PC-9 (cell line): ENCODE measurements at regions of chr2 and their contacts with region 1.

Region 1: GRCh38 chr2:46471-47345 is at the start of gene FAM110C:
- DNase-seq: peak; percentile 93 to 94
- H3K4me3 ChIP-seq: peak within 1 kb of the TSS; percentile 80
- H3K27ac ChIP-seq: peak within 1 kb of the TSS; percentile 89
- H3K4me1 ChIP-seq: peaks cover 45% of the 10 kb centered on the region
- H3K27me3 ChIP-seq: no peaks in the 10 kb centered on the region
- CTCF ChIP-seq: no peak
- total RNA-seq, gene FAM110C: 20.8 and 21.1 TPM in 2 replicates

Region 2: DNA sequence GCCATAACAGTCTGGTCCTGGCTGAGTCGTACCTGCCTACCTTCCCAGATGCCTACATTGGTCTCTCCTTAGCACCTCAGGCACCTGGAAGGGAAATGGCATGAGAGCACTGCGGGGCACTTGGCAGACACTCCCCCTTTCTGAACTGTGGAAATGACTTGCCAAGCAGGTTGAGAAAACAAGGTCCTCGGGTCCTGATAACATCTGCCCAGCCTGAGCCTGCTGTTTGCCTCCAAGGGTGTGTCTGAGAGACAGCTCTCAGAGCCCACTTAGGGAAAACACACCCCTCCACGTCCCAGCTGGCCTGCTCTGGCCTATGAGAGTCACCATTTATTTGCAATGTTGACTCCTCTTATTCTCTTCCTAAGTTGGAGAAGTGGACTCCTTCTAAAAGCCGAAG is 10.9 kb before region 1 on chr2:
- CTCF ChIA-PET with region 1: no interaction called
- POLR2A ChIA-PET with region 1: no interaction called
- intact Hi-C with region 1: loop called (anchors 1 kb)
- DNase-seq: peak; percentile 88 to 99
- H3K4me3 ChIP-seq: 0 out of 2 replicates have a peak overlapping the region, but pooled peaks have one; percentile 6
- H3K27ac ChIP-seq: peak overlapping the region; percentile 41
- H3K4me1 ChIP-seq: peaks cover 81% of the 10 kb centered on the region
- H3K27me3 ChIP-seq: no peaks in the 10 kb centered on the region
- CTCF ChIP-seq: no peak

Region 3: GRCh38 chr2:69366-70344 is 22.9 kb after region 1 on chr2:
- CTCF ChIA-PET with region 1: no interaction called
- POLR2A ChIA-PET with region 1: interaction called, 20 read pairs
- intact Hi-C with region 1: loop called (anchors 2 kb)
- DNase-seq: peak; percentile 48 to 68
- H3K4me3 ChIP-seq: no peak overlapping the region
- H3K27ac ChIP-seq: peak overlapping the region; percentile 61
- H3K4me1 ChIP-seq: peaks cover 28% of the 10 kb centered on the region
- H3K27me3 ChIP-seq: no peaks in the 10 kb centered on the region
- CTCF ChIP-seq: no peak

Region 4: GRCh38 chr2:151553-152334 is 105.0 kb after region 1 on chr2:
- CTCF ChIA-PET with region 1: no interaction called
- POLR2A ChIA-PET with region 1: no interaction called
- intact Hi-C with region 1: no loop called
- DNase-seq: no peak
- H3K4me3 ChIP-seq: no peak overlapping the region
- H3K27ac ChIP-seq: no peak overlapping the region
- H3K4me1 ChIP-seq: no peaks in the 10 kb centered on the region
- H3K27me3 ChIP-seq: no peaks in the 10 kb centered on the region
- CTCF ChIP-seq: no peak

Region 5: DNA sequence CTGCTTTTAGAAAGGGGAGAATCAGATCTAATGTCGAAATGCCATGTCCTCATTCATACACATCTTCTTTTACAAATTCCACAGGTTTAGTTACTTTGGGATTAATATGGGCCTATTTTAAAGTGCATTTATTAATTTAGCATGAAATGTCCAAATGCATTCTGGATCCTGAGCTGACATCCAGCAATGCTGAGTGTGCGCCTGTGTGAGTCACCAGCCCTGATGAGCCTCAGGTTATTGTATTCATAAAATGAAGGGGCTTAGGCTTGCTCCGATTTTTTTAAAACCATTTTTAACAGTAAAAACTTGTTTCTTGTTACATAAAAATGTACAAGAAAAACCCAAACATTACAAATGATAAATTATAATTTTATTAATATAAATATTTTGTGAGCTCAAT is 123.0 kb after region 1 on chr2:
- CTCF ChIA-PET with region 1: no interaction called
- POLR2A ChIA-PET with region 1: no interaction called
- intact Hi-C with region 1: no loop called
- DNase-seq: no peak
- H3K4me3 ChIP-seq: no peak overlapping the region
- H3K27ac ChIP-seq: no peak overlapping the region
- H3K4me1 ChIP-seq: no peaks in the 10 kb centered on the region
- H3K27me3 ChIP-seq: no peaks in the 10 kb centered on the region; the same call in 1 of the 2 replicates
- CTCF ChIP-seq: no peak

Region 6: DNA sequence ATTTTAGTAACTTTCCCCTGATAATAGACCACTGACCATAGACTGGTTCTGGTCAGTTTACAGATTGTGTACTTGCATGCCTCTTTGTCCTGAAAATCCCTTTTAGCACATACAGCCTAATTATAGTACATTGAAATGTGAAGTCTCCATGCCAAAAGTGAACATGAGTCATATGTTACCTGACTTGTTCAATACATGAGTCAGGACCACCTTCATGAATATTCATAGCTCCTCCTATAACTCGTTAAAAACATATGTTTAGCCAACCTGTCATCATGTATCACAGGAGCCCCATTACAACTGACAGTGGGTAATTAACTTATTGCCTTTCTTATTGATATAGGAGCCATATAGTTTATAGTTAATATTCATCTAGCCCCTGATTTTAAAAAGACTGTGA is 138.5 kb after region 1 on chr2:
- CTCF ChIA-PET with region 1: no interaction called
- POLR2A ChIA-PET with region 1: no interaction called
- intact Hi-C with region 1: no loop called
- DNase-seq: peak in 1 of 2 experiments; percentile 45
- H3K4me3 ChIP-seq: no peak overlapping the region
- H3K27ac ChIP-seq: no peak overlapping the region
- H3K4me1 ChIP-seq: no peaks in the 10 kb centered on the region
- H3K27me3 ChIP-seq: no peaks in the 10 kb centered on the region
- CTCF ChIP-seq: no peak

Region 7: GRCh38 chr2:264660-265468 is 218.2 kb after region 1 on chr2 and contains the start of gene ACP1:
- CTCF ChIA-PET with region 1: no interaction called
- POLR2A ChIA-PET with region 1: no interaction called
- intact Hi-C with region 1: loop called (anchors 1 kb)
- DNase-seq: peak; percentile 93 to 98
- H3K4me3 ChIP-seq: peak within 1 kb of the TSS; percentile 83
- H3K27ac ChIP-seq: peak within 1 kb of the TSS; percentile 93
- H3K4me1 ChIP-seq: peaks cover 33% of the 10 kb centered on the region
- H3K27me3 ChIP-seq: no peaks in the 10 kb centered on the region
- CTCF ChIP-seq: no peak
- total RNA-seq, gene ACP1: 115 and 116 TPM in 2 replicates

Region 8: DNA sequence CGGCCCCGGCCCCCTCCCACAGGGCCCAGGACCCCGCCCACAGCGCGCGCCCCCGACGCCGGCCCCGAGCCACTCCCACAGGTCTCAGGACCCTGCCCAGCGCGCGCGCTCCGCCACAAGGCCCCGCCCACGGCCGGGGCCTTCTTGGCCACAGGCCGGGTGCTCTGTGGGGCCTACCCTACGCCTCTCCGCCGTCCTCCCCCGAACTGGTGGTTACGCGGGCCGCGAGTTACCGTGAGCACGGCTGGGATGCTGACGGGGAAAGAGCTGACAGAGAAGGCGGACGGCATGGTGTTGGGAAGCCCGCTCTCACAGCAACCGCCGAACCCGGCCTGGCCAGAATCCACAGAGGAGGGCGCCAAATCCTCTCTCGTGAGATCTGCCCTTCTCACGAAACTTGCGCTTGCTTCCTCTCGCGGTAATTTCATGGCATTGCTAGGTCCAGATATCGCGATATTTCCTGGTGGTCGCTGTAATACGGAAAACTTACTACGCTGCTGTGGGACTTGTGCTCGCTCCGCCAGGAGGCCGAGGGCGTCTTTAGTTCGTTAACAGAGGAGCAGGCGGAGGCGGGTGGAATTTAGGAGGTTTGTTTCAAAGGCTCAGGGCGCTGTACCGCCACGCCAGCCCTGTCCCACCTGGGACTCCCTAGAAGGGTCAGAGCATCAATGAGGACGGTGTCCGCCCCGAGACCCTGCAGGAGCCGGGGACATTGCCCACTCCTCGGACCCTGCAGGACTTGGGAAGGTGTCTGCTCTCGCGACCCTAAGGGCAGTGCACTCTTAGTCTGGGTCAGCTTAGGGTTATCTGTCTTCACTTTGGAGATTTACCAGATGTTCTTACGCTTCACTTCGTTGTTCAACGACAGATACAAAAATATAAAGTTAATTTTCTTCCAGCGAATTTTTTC is 630.6 kb after region 1 on chr2 and contains the start of gene TMEM18:
- CTCF ChIA-PET with region 1: no interaction called
- POLR2A ChIA-PET with region 1: no interaction called
- intact Hi-C with region 1: loop called (anchors 1 kb)
- DNase-seq: peak; percentile 90 to 98
- H3K4me3 ChIP-seq: peak within 1 kb of the TSS; percentile 77
- H3K27ac ChIP-seq: peak within 1 kb of the TSS; percentile 97
- H3K4me1 ChIP-seq: peaks cover 22% of the 10 kb centered on the region
- H3K27me3 ChIP-seq: peaks cover 13% of the 10 kb centered on the region; the same call in 1 of the 2 replicates
- CTCF ChIP-seq: no peak; the same call in 1 of the 2 replicates
- total RNA-seq, gene TMEM18: 30.5 and 32.4 TPM in 2 replicates